ENCODE measurements at regions of chr16 and their contacts with region 1.

Region 1: DNA sequence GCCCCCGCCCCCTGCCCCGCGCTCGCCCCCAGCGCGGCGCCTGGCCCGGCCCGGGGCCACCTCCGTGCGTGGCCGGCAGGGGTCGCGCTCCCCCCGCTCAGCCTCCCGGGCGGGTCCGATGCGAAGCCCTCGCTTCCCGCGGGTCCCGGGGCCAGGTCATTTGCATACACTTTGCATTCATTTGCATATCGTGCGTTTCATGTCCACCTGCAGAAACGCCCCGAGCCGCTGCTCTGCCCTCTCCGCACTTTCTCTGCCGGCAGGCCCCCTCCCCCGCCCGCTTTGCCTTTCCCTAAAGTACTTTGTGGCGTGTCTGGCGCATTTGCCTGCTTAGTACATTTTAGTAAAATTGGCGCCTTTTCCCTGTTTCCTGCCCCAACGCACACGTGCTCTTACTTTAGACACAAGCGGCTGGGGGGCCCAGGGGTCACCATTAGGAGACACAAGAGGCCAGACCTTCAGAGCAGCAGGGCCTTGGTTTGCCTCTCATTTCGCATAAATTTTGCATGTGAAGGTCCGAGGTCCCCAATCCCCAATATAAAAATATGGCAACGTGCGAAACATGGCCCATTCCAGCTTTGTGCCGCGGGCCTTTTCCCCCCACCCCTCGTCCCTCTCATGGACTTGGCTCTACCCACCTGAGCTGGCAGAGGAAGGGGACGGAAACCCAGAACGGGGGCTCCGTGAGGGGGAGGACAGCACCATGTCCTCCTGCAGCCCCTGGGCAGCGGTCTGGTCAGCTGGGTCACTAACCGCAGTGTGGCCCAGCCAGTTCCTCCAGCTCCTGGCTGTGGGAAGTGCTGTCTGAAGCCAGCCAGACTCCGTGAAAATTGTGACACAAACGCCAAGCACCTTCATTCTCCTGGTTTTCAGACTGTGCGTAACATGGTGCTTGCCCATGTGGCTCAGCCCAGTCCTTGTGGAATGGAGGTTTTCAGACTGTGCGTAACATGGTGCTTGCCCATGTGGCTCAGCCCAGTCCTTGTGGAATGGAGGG is 34.8 kb downstream of the CBFA2T3 start:
- H3K4me3 Mint-ChIP-seq: peak overlapping the region; percentile 62
- H3K27ac Mint-ChIP-seq: no peak overlapping the region
- H3K4me1 Mint-ChIP-seq: peaks cover 59% of the 10 kb centered on the region
- H3K27me3 Mint-ChIP-seq: peaks cover 50% of the 10 kb centered on the region

Region 2: DNA sequence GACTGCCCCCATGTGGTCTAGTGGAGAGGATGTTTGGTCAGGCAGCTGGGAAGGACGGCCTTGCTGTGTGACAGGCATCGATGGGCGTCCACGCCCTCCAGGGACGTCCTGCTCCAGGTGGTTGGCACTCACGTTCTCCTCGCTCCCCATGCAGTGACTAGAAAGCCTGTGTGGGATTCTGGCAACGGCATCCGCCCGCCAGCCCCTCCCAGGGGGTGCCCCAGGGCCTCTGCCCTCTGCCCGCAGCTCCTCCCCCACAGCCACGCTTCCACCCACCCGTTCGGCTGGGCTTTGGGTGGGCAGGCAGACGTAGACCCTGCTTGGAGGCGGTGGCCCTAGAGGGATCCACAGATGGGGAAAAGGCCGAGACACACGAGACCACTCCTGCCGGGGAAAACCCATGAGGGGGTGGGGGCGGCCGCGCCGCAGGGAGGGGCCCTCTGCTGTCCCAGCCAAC is 308.5 kb before region 1 on chr16:
- intact Hi-C with region 1: no loop called
- H3K4me3 Mint-ChIP-seq: peak overlapping the region; percentile 88
- H3K27ac Mint-ChIP-seq: peak overlapping the region; percentile 83
- H3K4me1 Mint-ChIP-seq: peaks cover 58% of the 10 kb centered on the region
- H3K27me3 Mint-ChIP-seq: peaks cover 32% of the 10 kb centered on the region

Region 3: GRCh38 chr16:88768080-88768752 is 174.0 kb before region 1 on chr16:
- intact Hi-C with region 1: no loop called
- H3K4me3 Mint-ChIP-seq: peak overlapping the region; percentile 23
- H3K27ac Mint-ChIP-seq: peak overlapping the region; percentile 69
- H3K4me1 Mint-ChIP-seq: peaks cover 79% of the 10 kb centered on the region
- H3K27me3 Mint-ChIP-seq: no peaks in the 10 kb centered on the region

Region 4: GRCh38 chr16:88811769-88812512 is 130.3 kb before region 1 on chr16 and contains the start of gene APRT:
- intact Hi-C with region 1: loop called (anchors 5 kb)
- H3K4me3 Mint-ChIP-seq: peak within 1 kb of the TSS; percentile 80
- H3K27ac Mint-ChIP-seq: peak within 1 kb of the TSS; percentile 88
- H3K4me1 Mint-ChIP-seq: peaks cover 51% of the 10 kb centered on the region
- H3K27me3 Mint-ChIP-seq: no peaks in the 10 kb centered on the region

Region 5: DNA sequence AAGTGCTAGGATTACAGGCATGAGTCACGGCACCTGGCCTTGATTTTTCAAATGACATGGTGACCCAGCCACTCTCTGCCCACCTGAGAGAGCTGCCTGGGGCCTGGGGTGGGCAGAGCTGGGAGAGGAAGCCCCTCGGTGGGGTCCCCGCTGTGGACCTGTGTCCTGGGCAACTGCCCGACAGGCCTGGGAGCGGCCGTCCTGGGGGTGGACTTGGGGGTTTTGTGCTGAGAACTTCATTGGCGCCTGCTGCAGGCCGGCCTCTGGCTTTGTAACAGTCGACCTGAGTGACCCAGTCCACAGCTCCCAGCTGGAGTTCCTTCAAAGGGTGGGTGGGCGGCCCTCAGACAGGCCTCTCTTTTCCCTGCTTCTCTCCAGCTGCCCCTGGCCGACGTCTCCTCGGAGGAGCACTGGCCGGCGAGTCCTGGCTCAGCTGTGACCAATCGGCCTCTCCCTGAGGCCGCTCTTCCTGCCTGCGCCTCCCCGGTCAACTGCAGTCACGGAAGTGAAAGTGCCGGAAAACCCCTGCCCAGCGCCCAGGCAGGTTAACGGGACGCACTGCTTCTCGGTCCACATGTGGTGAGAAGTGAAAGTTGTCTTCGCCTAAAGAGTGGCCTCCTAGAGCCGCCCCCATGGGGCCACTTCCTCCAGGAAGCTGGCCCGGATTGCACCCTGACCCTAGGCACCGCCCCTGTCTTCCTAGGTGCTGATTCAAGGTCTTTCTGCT is 29.3 kb after region 1 on chr16:
- intact Hi-C with region 1: loop called (anchors 5 kb)
- H3K4me3 Mint-ChIP-seq: peak overlapping the region; percentile 42
- H3K27ac Mint-ChIP-seq: peak overlapping the region; percentile 78
- H3K4me1 Mint-ChIP-seq: peaks cover 96% of the 10 kb centered on the region
- H3K27me3 Mint-ChIP-seq: peaks cover 70% of the 10 kb centered on the region

Region 6: GRCh38 chr16:89115216-89115861 is 173.1 kb after region 1 on chr16:
- intact Hi-C with region 1: loop called (anchors 10 kb)
- H3K4me3 Mint-ChIP-seq: peak overlapping the region; percentile 85
- H3K27ac Mint-ChIP-seq: peak overlapping the region; percentile 94
- H3K4me1 Mint-ChIP-seq: peaks cover 57% of the 10 kb centered on the region
- H3K27me3 Mint-ChIP-seq: no peaks in the 10 kb centered on the region

Region 7: GRCh38 chr16:89167425-89167941 is 225.3 kb after region 1 on chr16:
- intact Hi-C with region 1: loop called (anchors 5 kb)
- H3K4me3 Mint-ChIP-seq: no peak overlapping the region
- H3K27ac Mint-ChIP-seq: no peak overlapping the region
- H3K4me1 Mint-ChIP-seq: peaks cover 25% of the 10 kb centered on the region
- H3K27me3 Mint-ChIP-seq: peaks cover 63% of the 10 kb centered on the region